GM18951 (cell line): ENCODE measurements at regions of chr7 and their contacts with region 1.

Region 1: GRCh38 chr7:95871078-95871782 is 98.9 kb downstream of the DYNC1I1 start:
- POLR2A ChIP-seq: no peak

Region 2: GRCh38 chr7:95723592-95724180 is 147.5 kb before region 1 on chr7:
- in situ Hi-C with region 1: loop called (anchors 10 kb)
- POLR2A ChIP-seq: no peak

Region 3: GRCh38 chr7:96045919-96046318 is 174.7 kb after region 1 on chr7:
- in situ Hi-C with region 1: no loop called
- POLR2A ChIP-seq: no peak

Region 4: GRCh38 chr7:96709381-96710228 is 838.4 kb after region 1 on chr7 and contains the start of gene SEM1:
- in situ Hi-C with region 1: no loop called
- POLR2A ChIP-seq: peak; percentile 70